ENCODE measurements at regions of chr14 and their contacts with region 1.

Region 1: DNA sequence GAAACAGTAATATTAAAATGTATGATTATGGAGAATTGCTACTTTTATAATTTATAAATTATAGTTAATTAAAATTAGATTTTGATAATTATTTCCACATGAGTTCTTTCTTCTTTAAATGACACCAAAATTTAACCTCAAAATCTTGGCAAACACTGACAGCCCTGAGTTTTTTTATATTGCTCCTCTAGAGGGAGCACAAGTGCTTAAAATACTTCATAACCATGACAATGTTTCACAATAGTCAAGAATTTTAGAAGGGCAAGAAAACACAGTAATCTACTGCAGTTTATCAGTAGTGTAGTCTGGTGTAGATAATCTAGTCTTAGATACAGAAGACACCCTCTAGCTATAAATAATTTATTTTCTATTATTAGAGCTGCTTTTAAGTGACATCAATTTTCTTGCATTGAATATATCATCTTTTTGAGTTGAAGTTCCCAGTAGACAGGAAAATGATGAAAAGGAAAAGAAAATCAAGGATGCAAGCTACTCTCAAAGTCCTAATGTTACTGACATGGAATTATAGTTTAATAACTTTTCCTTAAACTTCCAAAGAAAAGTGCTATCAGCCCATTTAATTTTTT is 14.3 kb upstream of the PTGER2 start:
- DNase-seq: peak; percentile 80
- ATAC-seq: peak; percentile 72
- H3K4me3 ChIP-seq: no peak overlapping the region
- H3K27ac ChIP-seq: no peak overlapping the region
- H3K4me1 ChIP-seq: no peaks in the 10 kb centered on the region
- H3K27me3 ChIP-seq: no peaks in the 10 kb centered on the region
- CTCF ChIP-seq: peak; percentile 83

Region 2: GRCh38 chr14:52413729-52414408 is 114.1 kb after region 1 on chr14:
- CTCF ChIA-PET with region 1: interaction called, 3 read pairs
- POLR2A ChIA-PET with region 1: no interaction called
- intact Hi-C with region 1: loop called (anchors 5 kb)
- DNase-seq: peak; percentile 85
- ATAC-seq: peak; percentile 94
- H3K4me3 ChIP-seq: peak overlapping the region; percentile 29; the same call in 1 of the 2 replicates
- H3K27ac ChIP-seq: peak overlapping the region; percentile 10; the same call in 1 of the 2 replicates
- H3K4me1 ChIP-seq: peaks cover 9% of the 10 kb centered on the region
- H3K27me3 ChIP-seq: no peaks in the 10 kb centered on the region
- CTCF ChIP-seq: no peak

Region 3: DNA sequence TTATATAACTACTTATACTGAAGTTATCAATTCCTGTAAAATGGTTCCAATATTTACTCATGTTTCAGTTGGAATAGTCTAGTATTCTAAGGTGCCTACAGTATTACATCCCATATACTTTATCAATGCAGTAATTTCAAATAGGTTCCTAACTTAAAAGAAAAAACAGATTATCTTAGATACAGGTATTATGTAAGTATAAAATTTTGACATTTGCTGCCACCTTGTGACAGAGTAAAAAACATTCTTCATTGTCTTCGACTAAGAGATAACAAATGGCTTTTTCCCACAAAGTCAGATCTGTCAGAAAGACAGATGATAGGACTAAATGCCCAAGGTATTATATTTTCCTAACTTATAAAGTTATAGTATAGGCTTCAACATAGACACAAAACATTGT is 173.8 kb after region 1 on chr14:
- CTCF ChIA-PET with region 1: interaction called, 4 read pairs
- POLR2A ChIA-PET with region 1: no interaction called
- intact Hi-C with region 1: loop called (anchors 1 kb)
- DNase-seq: peak; percentile 78
- ATAC-seq: peak; percentile 79
- H3K4me3 ChIP-seq: no peak overlapping the region
- H3K27ac ChIP-seq: no peak overlapping the region
- H3K4me1 ChIP-seq: no peaks in the 10 kb centered on the region
- H3K27me3 ChIP-seq: no peaks in the 10 kb centered on the region
- CTCF ChIP-seq: peak; percentile 83